Panc1 (cell line): ENCODE measurements at regions of chr5 and their contacts with region 1.

Region 1: GRCh38 chr5:61319388-61320146 is 12.5 kb upstream of the ZSWIM6 start:
- DNase-seq: no peak
- ATAC-seq: no peak
- H3K4me3 ChIP-seq: no peak overlapping the region
- H3K27ac ChIP-seq: no peak overlapping the region
- H3K4me1 ChIP-seq: peaks cover 4% of the 10 kb centered on the region; the same call in 1 of the 2 replicates
- H3K27me3 ChIP-seq: no peaks in the 10 kb centered on the region
- CTCF ChIP-seq: no peak

Region 2: GRCh38 chr5:60718166-60718892 is 601.2 kb before region 1 on chr5:
- CTCF ChIA-PET with region 1: no interaction called
- POLR2A ChIA-PET with region 1: no interaction called
- in situ Hi-C with region 1: no loop called
- intact Hi-C with region 1: no loop called
- DNase-seq: no peak
- ATAC-seq: no peak
- H3K4me3 ChIP-seq: no peak overlapping the region
- H3K27ac ChIP-seq: no peak overlapping the region
- H3K4me1 ChIP-seq: no peaks in the 10 kb centered on the region
- H3K27me3 ChIP-seq: peaks cover 3% of the 10 kb centered on the region; the same call in 1 of the 2 replicates
- CTCF ChIP-seq: no peak

Region 3: DNA sequence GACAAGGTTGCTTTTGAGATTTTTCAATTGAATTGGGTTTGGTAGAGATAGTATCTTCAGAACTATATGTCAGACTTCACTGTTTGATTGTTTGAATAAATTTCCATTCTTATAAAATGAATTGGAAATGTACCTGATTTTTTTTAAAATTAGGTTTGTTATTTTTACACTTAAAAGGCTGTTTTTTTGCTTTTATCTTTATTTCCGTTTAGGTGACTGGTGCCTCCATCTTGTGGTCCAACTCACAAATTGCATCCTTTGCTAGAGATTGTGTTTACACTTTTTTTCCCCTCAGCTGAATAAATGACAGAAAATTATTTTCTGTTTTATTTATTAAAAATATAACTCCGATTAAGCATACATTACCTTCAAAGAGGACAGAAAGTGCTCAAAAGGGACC is 359.0 kb before region 1 on chr5:
- CTCF ChIA-PET with region 1: no interaction called
- POLR2A ChIA-PET with region 1: no interaction called
- in situ Hi-C with region 1: no loop called
- intact Hi-C with region 1: loop called (anchors 10 kb)
- DNase-seq: no peak
- ATAC-seq: no peak
- H3K4me3 ChIP-seq: no peak overlapping the region
- H3K27ac ChIP-seq: no peak overlapping the region
- H3K4me1 ChIP-seq: no peaks in the 10 kb centered on the region
- H3K27me3 ChIP-seq: no peaks in the 10 kb centered on the region
- CTCF ChIP-seq: peak; percentile 73; the same call in 1 of the 2 replicates

Region 4: GRCh38 chr5:61055434-61056006 is 264.0 kb before region 1 on chr5:
- CTCF ChIA-PET with region 1: no interaction called
- POLR2A ChIA-PET with region 1: no interaction called
- in situ Hi-C with region 1: no loop called
- intact Hi-C with region 1: loop called (anchors 10 kb)
- DNase-seq: no peak
- ATAC-seq: no peak
- H3K4me3 ChIP-seq: no peak overlapping the region
- H3K27ac ChIP-seq: no peak overlapping the region
- H3K4me1 ChIP-seq: peaks cover 21% of the 10 kb centered on the region; the same call in 1 of the 2 replicates
- H3K27me3 ChIP-seq: no peaks in the 10 kb centered on the region
- CTCF ChIP-seq: peak; percentile 72; the same call in 1 of the 2 replicates